Transverse colon (tissue), 4 donors: ENCODE measurements at regions of chr21 and their contacts with region 1.

Region 1: DNA sequence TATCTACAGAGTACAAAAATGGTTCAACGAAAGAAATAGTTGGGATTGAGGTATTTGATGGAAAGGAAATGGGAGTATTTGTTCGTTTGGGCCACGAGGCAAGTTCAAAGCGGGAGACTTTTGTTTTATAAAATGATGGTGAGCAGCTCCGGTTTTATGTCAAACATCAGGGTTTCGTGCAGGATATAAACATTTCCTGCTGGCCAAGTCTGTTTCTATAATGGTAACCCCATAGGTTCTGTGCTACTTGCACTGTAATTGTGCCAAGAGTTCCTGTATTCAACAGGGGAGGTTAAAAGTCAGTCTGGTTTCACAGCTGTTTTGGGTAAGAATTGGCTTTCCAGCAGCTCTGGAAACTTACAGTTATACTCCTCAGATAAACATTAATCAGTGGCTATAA is 290.3 kb upstream of the NRIP1 start:
- DNase-seq: no peak
- H3K4me3 ChIP-seq: no peak overlapping the region
- H3K27ac ChIP-seq: no peak overlapping the region
- H3K4me1 ChIP-seq: no peaks in the 10 kb centered on the region
- H3K27me3 ChIP-seq: no peaks in the 10 kb centered on the region
- CTCF ChIP-seq: no peak
- EP300 ChIP-seq: no peak
- POLR2A ChIP-seq: no peak

Region 2: GRCh38 chr21:15250384-15250783 is 104.7 kb before region 1 on chr21:
- in situ Hi-C with region 1: loop called in 1 of 4 experiments (anchors 25 kb)
- intact Hi-C with region 1: no loop called
- DNase-seq: no peak
- H3K4me3 ChIP-seq: no peak overlapping the region
- H3K27ac ChIP-seq: no peak overlapping the region
- H3K4me1 ChIP-seq: no peaks in the 10 kb centered on the region
- H3K27me3 ChIP-seq: no peaks in the 10 kb centered on the region
- CTCF ChIP-seq: no peak
- EP300 ChIP-seq: no peak
- POLR2A ChIP-seq: no peak

Region 3: GRCh38 chr21:15408089-15408488 is 53.0 kb after region 1 on chr21:
- in situ Hi-C with region 1: no loop called
- intact Hi-C with region 1: no loop called
- DNase-seq: no peak
- H3K4me3 ChIP-seq: no peak overlapping the region
- H3K27ac ChIP-seq: no peak overlapping the region
- H3K4me1 ChIP-seq: no peaks in the 10 kb centered on the region
- H3K27me3 ChIP-seq: no peaks in the 10 kb centered on the region
- CTCF ChIP-seq: no peak
- EP300 ChIP-seq: no peak
- POLR2A ChIP-seq: no peak